WTC11 (cell line): ENCODE measurements at regions of chr4 and their contacts with region 1.

Region 1: GRCh38 chr4:168585168-168586091 is 88.6 kb downstream of the PALLD start:
- DNase-seq: peak; percentile 85
- ATAC-seq: peak; percentile 100
- H3K4me3 Mint-ChIP-seq: no peak overlapping the region
- H3K27ac Mint-ChIP-seq: no peak overlapping the region
- H3K4me1 Mint-ChIP-seq: peaks cover 4% of the 10 kb centered on the region
- H3K27me3 Mint-ChIP-seq: no peaks in the 10 kb centered on the region
- CTCF ChIP-seq: peak; percentile 50; the same call in 1 of the 2 replicates

Region 2: GRCh38 chr4:168433571-168433970 is 151.9 kb before region 1 on chr4:
- CTCF ChIA-PET with region 1: no interaction called
- POLR2A ChIA-PET with region 1: no interaction called
- DNase-seq: no peak
- ATAC-seq: no peak
- H3K4me3 Mint-ChIP-seq: no peak overlapping the region
- H3K27ac Mint-ChIP-seq: no peak overlapping the region
- H3K4me1 Mint-ChIP-seq: no peaks in the 10 kb centered on the region
- H3K27me3 Mint-ChIP-seq: no peaks in the 10 kb centered on the region
- CTCF ChIP-seq: no peak

Region 3: DNA sequence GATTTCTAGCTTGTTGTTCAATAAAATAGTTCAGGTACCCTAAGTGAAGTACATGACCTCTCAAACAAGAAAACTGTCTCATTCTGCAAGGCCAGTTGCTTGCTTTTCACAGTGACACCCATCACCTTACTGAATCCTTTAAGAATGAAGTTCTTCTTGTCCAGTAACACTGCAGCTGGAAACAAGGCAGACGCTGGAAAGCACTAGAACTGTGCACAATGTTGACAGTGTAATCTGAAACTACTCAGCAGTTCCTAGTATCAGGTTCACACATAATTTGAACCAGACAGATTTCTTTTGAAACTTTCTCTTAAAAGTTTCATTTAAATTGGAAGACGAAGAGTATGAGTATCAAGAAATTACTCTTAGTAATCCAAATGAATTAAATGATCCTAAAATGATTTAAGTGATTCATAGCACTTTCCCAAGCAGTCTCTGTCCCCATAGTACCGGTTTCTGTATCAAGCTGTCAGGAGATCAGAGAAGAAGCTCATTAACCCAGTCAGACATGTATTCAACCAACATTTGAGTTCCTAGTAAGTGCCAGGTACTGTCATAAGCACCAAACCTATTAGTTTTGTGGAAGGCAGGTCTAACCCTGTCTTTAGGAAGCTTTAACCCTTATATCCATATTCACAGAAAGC is 25.1 kb before region 1 on chr4:
- CTCF ChIA-PET with region 1: no interaction called
- POLR2A ChIA-PET with region 1: no interaction called
- DNase-seq: no peak
- ATAC-seq: no peak
- H3K4me3 Mint-ChIP-seq: no peak overlapping the region
- H3K27ac Mint-ChIP-seq: no peak overlapping the region
- H3K4me1 Mint-ChIP-seq: peaks cover 26% of the 10 kb centered on the region
- H3K27me3 Mint-ChIP-seq: peaks cover 13% of the 10 kb centered on the region
- CTCF ChIP-seq: no peak

Region 4: DNA sequence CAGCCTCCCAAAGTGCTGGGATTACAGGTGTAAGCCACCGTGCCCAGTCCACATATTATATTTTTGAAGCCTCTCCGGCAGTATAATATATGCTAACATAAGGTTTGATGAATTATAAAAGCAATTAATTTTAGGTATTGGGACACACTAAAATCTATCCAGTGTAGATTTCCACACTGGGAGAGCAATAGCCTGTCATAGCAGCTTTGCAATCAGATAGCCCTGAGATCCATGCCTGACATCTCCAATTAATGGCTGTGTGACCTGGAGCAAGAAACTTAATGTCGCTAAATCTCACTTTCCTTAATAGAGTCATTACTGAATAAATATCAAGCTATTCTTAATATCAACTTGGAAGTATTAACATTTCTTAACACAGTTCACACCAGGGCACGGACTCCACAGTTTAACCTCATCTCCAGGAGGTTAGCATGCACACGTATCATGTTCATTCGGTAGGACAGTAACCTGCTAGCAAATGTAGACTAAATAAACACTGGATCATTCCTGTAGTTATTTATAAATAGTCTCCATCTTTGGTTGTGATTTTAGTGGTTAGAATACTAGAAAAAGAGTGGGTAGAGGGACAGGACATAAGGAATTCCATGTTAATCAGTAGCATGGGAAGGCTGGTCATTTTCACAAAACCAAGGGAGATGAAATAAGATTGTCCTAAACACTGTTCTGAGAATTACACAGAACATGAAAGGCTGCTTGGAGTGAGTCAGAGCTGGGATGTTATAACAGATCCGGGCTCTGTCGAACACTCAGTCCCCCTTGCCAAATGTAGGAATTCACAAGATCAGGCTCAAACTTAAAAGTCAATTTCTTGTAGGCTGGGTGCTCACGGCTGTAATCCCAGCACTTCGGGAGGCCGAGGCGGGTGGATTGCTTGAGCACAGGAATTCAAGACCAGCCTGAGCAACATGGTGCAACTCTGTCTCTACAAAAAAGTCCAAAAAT is 166.1 kb after region 1 on chr4:
- CTCF ChIA-PET with region 1: no interaction called
- POLR2A ChIA-PET with region 1: no interaction called
- DNase-seq: no peak
- ATAC-seq: no peak
- H3K4me3 Mint-ChIP-seq: no peak overlapping the region
- H3K27ac Mint-ChIP-seq: no peak overlapping the region
- H3K4me1 Mint-ChIP-seq: no peaks in the 10 kb centered on the region
- H3K27me3 Mint-ChIP-seq: no peaks in the 10 kb centered on the region
- CTCF ChIP-seq: no peak

Region 5: DNA sequence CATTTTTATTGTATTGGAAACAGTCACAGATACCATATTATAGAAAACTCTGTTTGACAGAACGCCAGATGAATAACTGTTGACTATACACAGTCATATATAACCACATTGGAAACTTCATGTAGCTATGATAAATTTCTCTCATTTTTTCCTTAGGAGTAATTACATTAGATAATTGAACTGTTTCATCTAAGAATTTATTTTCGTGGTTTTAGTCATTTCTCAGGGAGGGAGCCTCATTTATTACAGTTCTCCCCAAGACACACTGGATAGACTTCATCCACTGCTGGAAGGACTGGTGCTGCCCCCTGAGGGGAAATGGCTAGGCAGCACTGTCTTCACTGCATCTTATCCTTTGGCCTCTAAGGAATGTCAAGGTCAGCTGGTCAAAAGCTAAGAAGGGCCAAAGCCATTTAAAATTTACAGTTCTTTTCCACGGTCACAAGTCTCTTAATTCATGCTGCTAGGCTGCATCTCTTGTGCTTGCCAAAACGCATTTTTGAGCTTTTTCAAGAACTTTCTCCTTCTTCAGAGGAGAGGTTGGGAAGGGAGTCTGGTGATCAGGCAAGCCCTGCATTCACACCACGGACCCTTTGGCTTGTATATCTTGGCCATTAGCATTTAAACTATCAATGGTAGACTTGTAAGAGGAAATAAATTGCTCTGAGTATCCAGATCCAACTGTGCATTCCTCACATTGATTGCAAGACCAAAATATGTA is 279.6 kb after region 1 on chr4:
- CTCF ChIA-PET with region 1: interaction called, 11 read pairs
- POLR2A ChIA-PET with region 1: no interaction called
- DNase-seq: peak; percentile 42
- ATAC-seq: peak; percentile 95
- H3K4me3 Mint-ChIP-seq: no peak overlapping the region
- H3K27ac Mint-ChIP-seq: peak overlapping the region; percentile 50
- H3K4me1 Mint-ChIP-seq: peaks cover 38% of the 10 kb centered on the region
- H3K27me3 Mint-ChIP-seq: no peaks in the 10 kb centered on the region
- CTCF ChIP-seq: no peak

Region 6: DNA sequence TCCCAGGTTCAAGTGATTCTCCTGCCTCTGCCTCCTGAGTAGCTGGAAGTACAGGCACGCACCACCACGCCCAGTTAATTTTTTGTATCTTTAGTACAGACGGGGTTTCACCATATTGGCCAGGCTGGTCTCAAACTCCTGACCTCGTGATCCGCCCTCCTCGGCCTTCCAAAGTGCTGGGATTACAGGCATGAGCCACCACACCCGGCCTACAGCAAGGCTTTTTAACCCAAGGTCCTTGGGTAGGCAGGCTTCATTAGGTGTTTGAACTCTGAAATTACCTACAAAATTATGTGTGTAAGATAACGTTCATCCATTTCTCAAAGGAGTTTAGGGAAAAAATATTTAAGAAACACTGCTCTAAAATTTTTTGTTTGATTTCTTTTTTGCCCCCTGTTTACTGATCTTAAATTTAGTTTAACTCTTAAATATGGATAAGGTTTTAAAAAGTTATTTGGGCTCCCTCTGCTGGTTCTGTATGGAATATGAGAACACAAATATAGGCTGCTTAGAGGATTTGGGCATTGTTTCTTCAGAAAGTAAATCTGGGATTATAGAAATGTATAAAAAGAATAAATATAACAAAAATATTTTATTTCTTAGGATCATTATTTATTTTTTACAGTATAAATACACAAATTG is 331.8 kb after region 1 on chr4:
- CTCF ChIA-PET with region 1: interaction called, 53 read pairs
- POLR2A ChIA-PET with region 1: no interaction called
- DNase-seq: no peak
- ATAC-seq: no peak
- H3K4me3 Mint-ChIP-seq: no peak overlapping the region
- H3K27ac Mint-ChIP-seq: no peak overlapping the region
- H3K4me1 Mint-ChIP-seq: peaks cover 33% of the 10 kb centered on the region
- H3K27me3 Mint-ChIP-seq: no peaks in the 10 kb centered on the region
- CTCF ChIP-seq: no peak